B cell (primary cell): ENCODE measurements at regions of chr19 and their contacts with region 1.

Region 1: GRCh38 chr19:18000935-18001778 is 6.8 kb upstream of the ARRDC2 start:
- DNase-seq: peak; percentile 99
- ATAC-seq: peak; percentile 86
- H3K4me3 ChIP-seq: peak overlapping the region; percentile 66 to 94 (median 89)
- H3K4me3 Mint-ChIP-seq: peak overlapping the region; percentile 95
- H3K27ac ChIP-seq: peak overlapping the region; percentile 97 to 99
- H3K27ac Mint-ChIP-seq: peak overlapping the region; percentile 98
- H3K4me1 ChIP-seq: peaks cover 22 to 39% of the 10 kb centered on the region in 2 donors
- H3K4me1 Mint-ChIP-seq: peaks cover 32% of the 10 kb centered on the region
- H3K27me3 ChIP-seq: no peaks in the 10 kb centered on the region
- H3K27me3 Mint-ChIP-seq: no peaks in the 10 kb centered on the region
- CTCF ChIP-seq: no peak

Region 2: GRCh38 chr19:17747205-17748098 is 253.7 kb before region 1 on chr19:
- CTCF ChIA-PET with region 1: interaction called, 3 read pairs
- POLR2A ChIA-PET with region 1: interaction called, 6 read pairs
- intact Hi-C with region 1: loop called (anchors 2 kb)
- DNase-seq: peak; percentile 97
- ATAC-seq: peak; percentile 80
- H3K4me3 ChIP-seq: peak overlapping the region; percentile 38 to 72 (median 70)
- H3K4me3 Mint-ChIP-seq: peak overlapping the region; percentile 89
- H3K27ac ChIP-seq: peak overlapping the region in 1 of 2 donors; percentile 26
- H3K27ac Mint-ChIP-seq: peak overlapping the region; percentile 71
- H3K4me1 ChIP-seq: peaks cover 38 to 60% of the 10 kb centered on the region in 2 donors
- H3K4me1 Mint-ChIP-seq: peaks cover 51% of the 10 kb centered on the region
- H3K27me3 ChIP-seq: no peaks in the 10 kb centered on the region
- H3K27me3 Mint-ChIP-seq: no peaks in the 10 kb centered on the region
- CTCF ChIP-seq: no peak

Region 3: DNA sequence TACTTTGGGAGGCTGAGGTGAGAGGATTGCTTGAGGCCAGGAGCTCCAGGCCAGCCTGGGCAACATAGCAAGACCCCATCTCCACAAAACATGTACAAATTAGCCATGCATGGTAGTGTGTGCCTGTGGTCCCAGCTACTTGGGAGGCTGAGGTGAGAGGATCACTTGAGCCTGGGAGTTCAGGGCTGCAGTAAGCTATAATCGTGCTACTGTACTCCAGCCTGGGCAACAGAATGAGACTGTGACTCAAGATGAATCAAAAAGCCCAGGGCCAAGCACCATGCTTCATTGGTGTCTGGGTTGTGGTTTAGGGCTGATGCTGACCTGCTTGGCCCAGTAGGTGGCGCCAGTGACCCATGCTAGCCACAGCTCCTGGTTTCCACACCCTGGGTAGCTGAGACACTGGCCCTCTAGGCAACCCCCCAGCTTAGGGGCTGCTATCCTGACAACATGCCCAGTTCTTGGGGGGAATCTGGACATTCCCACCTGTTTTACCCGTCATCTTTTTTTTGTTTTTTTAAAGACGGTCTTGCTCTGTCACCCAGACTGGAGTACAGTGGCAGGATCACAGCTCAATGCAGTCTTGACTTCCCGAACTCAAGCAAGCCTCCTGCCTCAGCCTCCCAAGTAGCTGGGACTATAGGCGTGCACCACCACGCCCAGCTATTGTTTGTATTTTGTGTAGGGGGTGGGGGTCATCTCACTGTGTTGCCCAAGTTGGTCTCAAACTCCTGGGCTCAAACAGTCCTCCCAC is 62.9 kb before region 1 on chr19:
- CTCF ChIA-PET with region 1: interaction called, 346 read pairs
- POLR2A ChIA-PET with region 1: interaction called, 13 read pairs
- intact Hi-C with region 1: loop called (anchors 1 kb)
- DNase-seq: peak; percentile 88
- ATAC-seq: peak; percentile 98
- H3K4me3 ChIP-seq: no peak overlapping the region
- H3K4me3 Mint-ChIP-seq: no peak overlapping the region
- H3K27ac ChIP-seq: no peak overlapping the region
- H3K27ac Mint-ChIP-seq: peak overlapping the region; percentile 41
- H3K4me1 ChIP-seq: peaks cover 5 to 10% of the 10 kb centered on the region in 2 donors
- H3K4me1 Mint-ChIP-seq: peaks cover 11% of the 10 kb centered on the region
- H3K27me3 ChIP-seq: no peaks in the 10 kb centered on the region
- H3K27me3 Mint-ChIP-seq: no peaks in the 10 kb centered on the region
- CTCF ChIP-seq: peak; percentile 94

Region 4: DNA sequence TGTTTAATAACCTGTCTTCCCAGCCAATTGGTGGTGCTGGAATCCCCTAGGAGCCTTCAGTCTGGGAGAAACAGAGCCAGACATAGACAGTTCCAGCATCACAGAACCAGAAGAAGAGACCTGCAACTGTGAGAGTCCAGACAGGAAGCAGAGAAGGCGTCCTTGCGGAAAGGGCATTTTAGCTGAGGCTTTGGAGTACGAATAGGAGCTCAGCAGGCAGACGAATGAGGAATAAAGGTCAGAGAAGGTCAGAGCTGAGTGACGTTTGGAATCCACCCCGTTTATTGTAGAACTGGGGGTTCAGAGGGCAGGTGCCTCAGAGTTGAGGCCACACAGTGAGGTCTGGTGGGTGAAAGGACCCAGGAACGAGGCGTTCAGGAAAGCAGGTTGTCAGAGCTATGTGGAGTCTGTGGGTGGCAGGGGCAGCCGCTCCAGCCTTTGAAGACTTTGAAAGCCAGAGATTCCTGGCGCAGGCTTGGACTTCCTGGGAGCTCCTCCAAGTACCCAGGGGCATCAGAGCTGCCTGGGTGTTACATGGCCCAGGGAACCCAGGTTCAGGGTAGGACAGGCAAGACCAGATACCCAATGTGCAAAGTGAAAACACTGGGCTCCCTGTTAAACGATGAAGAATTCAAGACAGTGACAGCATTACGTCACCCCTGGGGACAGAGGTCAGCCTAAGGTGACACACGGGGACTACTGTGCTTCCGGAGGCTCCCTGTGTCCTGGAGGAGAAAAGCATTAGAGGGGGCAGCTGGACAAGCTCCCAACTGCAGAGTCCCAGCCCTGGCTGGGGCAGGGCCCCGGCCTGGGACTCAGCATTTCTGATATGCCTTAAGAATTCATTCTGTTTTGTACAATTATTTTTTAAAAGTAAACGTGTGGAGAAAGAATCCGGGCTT is 12.3 kb after region 1 on chr19:
- CTCF ChIA-PET with region 1: interaction called, 3 read pairs
- POLR2A ChIA-PET with region 1: interaction called, 137 read pairs
- intact Hi-C with region 1: no loop called
- DNase-seq: peak; percentile 32
- ATAC-seq: no peak
- H3K4me3 ChIP-seq: no peak overlapping the region
- H3K4me3 Mint-ChIP-seq: peak overlapping the region; percentile 53
- H3K27ac ChIP-seq: peak overlapping the region in 1 of 2 donors; percentile 56
- H3K27ac Mint-ChIP-seq: peak overlapping the region; percentile 88
- H3K4me1 ChIP-seq: peaks cover 16 to 41% of the 10 kb centered on the region in 2 donors
- H3K4me1 Mint-ChIP-seq: peaks cover 60% of the 10 kb centered on the region
- H3K27me3 ChIP-seq: no peaks in the 10 kb centered on the region
- H3K27me3 Mint-ChIP-seq: no peaks in the 10 kb centered on the region
- CTCF ChIP-seq: no peak

Region 5: GRCh38 chr19:18044825-18045304 is 43.7 kb after region 1 on chr19:
- CTCF ChIA-PET with region 1: interaction called, 62 read pairs
- POLR2A ChIA-PET with region 1: interaction called, 35 read pairs
- intact Hi-C with region 1: no loop called
- DNase-seq: peak; percentile 93
- ATAC-seq: peak; percentile 91
- H3K4me3 ChIP-seq: peak overlapping the region in 4 of 5 experiments; percentile 20 to 52 (median 36)
- H3K4me3 Mint-ChIP-seq: peak overlapping the region; percentile 85
- H3K27ac ChIP-seq: peak overlapping the region; percentile 80 to 91
- H3K27ac Mint-ChIP-seq: peak overlapping the region; percentile 97
- H3K4me1 ChIP-seq: peaks cover 38 to 55% of the 10 kb centered on the region in 2 donors
- H3K4me1 Mint-ChIP-seq: peaks cover 52% of the 10 kb centered on the region
- H3K27me3 ChIP-seq: no peaks in the 10 kb centered on the region
- H3K27me3 Mint-ChIP-seq: no peaks in the 10 kb centered on the region
- CTCF ChIP-seq: no peak

Region 6: DNA sequence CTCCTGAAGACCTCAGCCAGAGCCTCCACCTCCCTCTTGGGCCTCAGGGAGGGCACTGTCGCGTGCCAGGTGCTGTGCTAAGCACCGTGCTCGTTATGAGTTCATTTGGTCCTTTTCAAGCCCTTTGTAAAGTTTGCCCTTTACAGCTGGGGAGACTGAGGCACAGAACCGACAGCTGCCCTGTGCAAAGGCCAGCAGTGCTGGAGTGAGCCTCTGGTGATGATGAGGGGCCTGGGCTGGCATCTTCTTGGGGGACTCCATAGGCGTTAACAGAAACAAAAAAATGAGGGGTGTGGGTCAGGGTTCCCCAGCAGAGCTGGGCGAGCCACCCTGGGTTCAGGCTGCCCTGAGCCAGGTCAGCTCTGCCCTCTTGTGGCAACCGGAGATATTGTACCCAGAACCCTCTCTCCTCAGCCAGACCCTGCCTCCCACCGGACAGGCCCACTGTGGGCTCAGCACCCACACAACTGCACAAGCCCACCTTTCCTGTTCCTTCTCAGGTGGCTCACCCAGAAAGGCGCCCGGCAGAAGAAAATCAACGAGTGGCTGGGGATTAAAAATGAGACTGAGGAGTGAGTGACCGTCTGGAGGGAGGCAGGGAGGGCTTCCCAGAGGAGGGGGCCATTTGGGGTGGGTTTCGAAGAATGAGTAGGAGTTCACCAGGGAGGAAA is 167.0 kb after region 1 on chr19:
- CTCF ChIA-PET with region 1: interaction called, 3 read pairs
- POLR2A ChIA-PET with region 1: interaction called, 3 read pairs
- intact Hi-C with region 1: loop called (anchors 2 kb)
- DNase-seq: peak; percentile 79
- ATAC-seq: peak; percentile 28
- H3K4me3 ChIP-seq: peak overlapping the region in 4 of 5 experiments; percentile 21 to 47 (median 33)
- H3K4me3 Mint-ChIP-seq: peak overlapping the region; percentile 87
- H3K27ac ChIP-seq: peak overlapping the region; percentile 97 to 99
- H3K27ac Mint-ChIP-seq: peak overlapping the region; percentile 98
- H3K4me1 ChIP-seq: peaks cover 50 to 58% of the 10 kb centered on the region in 2 donors
- H3K4me1 Mint-ChIP-seq: peaks cover 52% of the 10 kb centered on the region
- H3K27me3 ChIP-seq: no peaks in the 10 kb centered on the region
- H3K27me3 Mint-ChIP-seq: no peaks in the 10 kb centered on the region
- CTCF ChIP-seq: peak; percentile 80